ENCODE measurements at regions of chr11 and their contacts with region 1.

Region 1: GRCh38 chr11:97140885-97141494 is 751.2 kb downstream of the JRKL start:
- DNase-seq: no peak
- ATAC-seq: no peak

Region 2: DNA sequence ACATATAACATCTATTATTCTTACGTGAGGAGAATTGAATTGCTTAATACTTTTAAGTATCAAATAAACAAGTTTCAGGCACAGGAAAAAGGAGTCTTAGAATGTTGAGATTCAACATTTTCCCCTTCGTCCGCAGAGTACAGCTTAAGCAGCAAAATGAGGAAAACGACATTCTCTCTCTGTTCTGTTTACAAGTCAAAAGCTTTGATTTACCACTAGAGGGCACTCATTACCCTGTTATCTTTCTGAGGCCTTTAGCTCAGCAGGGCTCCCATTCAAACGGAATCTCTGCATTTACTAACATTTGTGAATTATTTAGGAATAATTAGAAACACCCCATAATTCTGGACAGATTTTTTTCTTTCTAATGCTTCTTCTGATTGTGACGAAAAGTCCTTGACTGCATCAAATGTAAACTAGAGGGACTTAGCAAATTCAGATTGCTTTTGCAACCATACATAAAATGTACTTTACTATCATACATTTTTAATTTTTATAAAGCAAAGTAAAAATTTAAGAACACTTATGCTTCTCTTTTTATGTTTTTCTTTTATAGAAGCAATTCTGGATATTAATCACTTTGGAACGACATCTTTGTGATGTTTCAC is 676.2 kb before region 1 on chr11:
- intact Hi-C with region 1: loop called in 1 of 2 experiments (anchors 2 kb)
- DNase-seq: no peak
- ATAC-seq: peak; percentile 94 to 95

Region 3: DNA sequence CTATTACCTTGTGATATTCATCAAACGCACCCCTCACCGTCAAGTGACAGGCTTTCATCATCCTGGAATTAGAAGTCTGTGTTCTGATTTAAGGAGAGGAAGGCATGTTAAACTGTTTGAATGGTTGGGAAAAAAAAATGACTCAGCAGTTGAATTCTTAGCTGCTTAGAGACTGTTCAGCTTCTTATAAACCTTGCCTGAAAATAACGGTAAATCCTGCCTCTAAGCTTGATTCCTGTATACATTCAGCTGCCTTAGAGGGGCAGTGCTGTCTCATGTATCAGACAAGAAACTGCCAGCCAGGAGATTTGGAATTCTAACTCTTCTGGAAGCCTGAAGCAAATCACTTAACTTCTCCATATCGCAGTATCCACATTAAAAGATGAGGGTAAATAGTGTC is 313.8 kb before region 1 on chr11:
- intact Hi-C with region 1: loop called in 1 of 2 experiments (anchors 5 kb)
- DNase-seq: no peak
- ATAC-seq: peak; percentile 60 to 73

Measured in left cardiac atrium (tissue), 4 donors.